ENCODE measurements at regions of chr9 and their contacts with region 1.

Region 1: GRCh38 chr9:649128-650074 is 192.1 kb upstream of the DMRT1 start:
- DNase-seq: peak in 1 of 2 donors; percentile 8
- H3K4me3 ChIP-seq: no peak overlapping the region
- H3K27ac ChIP-seq: peak overlapping the region in 2 of 3 donors; percentile 9 to 62
- H3K4me1 ChIP-seq: peaks cover 21 to 34% of the 10 kb centered on the region in 2 donors
- H3K27me3 ChIP-seq: no peaks in the 10 kb centered on the region
- CTCF ChIP-seq: no peak
- POLR2A ChIP-seq: no peak

Region 2: GRCh38 chr9:693201-694091 is 44.0 kb after region 1 on chr9:
- intact Hi-C with region 1: loop called (anchors 10 kb)
- DNase-seq: peak; percentile 51 to 65
- H3K4me3 ChIP-seq: no peak overlapping the region
- H3K27ac ChIP-seq: peak overlapping the region; percentile 96 to 99 (median 98)
- H3K4me1 ChIP-seq: peaks cover 60 to 73% of the 10 kb centered on the region in 2 donors
- H3K27me3 ChIP-seq: no peaks in the 10 kb centered on the region
- CTCF ChIP-seq: peak in 2 of 6 experiments; percentile 7 to 28
- POLR2A ChIP-seq: peak in 1 of 2 donors; percentile 72

Measured in thyroid gland (tissue), 4 donors.